Activated T-helper 2 cell treated with anti-CD3 and anti-CD28 coated beads, Interferon-gamma antibody, Interleukin-2, Interleukin-4, amounts not matched to agents 10 μg/mL and 5 μg/mL and 100 μg/mL, durations not matched to agents 14 hours and 24 hours and 36 hours (primary cell): ENCODE measurements at regions of chr10 and their contacts with region 1.

Region 1: DNA sequence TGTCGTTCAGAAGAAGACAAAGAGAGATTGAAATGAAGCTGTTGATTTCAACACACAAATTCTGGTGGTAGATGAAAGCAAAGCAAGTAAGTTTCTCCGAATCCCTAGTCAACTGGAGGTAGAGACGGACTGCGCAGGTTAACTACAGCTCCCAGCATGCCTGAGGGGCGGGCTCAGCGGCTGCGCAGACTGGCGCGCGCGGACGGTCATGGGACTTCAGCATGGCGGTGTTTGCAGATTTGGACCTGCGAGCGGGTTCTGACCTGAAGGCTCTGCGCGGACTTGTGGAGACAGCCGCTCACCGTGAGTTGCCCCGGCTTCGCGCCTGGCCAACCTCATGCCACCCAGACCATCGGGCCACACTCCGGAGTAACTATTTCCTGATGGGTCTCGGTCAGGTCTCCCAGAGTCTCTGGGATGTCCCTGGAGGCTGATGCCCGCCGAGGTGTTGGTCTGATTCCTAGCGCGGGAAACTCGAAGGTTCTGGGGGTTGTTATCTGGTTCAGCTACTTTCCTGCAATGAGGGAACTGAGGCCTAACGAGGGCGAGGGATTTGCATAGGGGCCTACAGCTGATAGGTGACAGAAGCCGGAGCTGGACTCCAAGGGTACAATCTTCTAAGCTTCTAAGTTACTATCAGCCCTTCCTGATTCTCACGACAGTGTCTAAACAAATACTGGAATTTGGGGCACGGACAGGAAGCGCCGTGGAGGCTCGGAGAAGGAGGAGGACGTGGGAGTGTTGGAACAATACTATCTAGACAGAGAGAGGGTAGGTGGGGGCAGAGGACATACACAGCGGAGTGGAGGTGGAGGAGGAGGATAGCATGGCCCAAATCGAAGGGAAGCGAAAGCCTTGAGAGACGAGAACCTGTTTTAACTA is at the start of gene RPP30:
- DNase-seq: peak; percentile 76
- H3K4me3 Mint-ChIP-seq: peak within 1 kb of the TSS; percentile 100
- H3K27ac Mint-ChIP-seq: peak within 1 kb of the TSS; percentile 97
- H3K4me1 Mint-ChIP-seq: peaks cover 25% of the 10 kb centered on the region
- H3K27me3 Mint-ChIP-seq: peaks cover 21% of the 10 kb centered on the region
- total RNA-seq, gene RPP30: 69.1 and 73.4 TPM in 2 replicates

Region 2: GRCh38 chr10:89793649-89794254 is 1078.3 kb before region 1 on chr10:
- intact Hi-C with region 1: loop called (anchors 1 kb)
- DNase-seq: no peak
- H3K4me3 Mint-ChIP-seq: no peak overlapping the region
- H3K27ac Mint-ChIP-seq: no peak overlapping the region
- H3K4me1 Mint-ChIP-seq: peaks cover 9% of the 10 kb centered on the region
- H3K27me3 Mint-ChIP-seq: no peaks in the 10 kb centered on the region

Region 3: DNA sequence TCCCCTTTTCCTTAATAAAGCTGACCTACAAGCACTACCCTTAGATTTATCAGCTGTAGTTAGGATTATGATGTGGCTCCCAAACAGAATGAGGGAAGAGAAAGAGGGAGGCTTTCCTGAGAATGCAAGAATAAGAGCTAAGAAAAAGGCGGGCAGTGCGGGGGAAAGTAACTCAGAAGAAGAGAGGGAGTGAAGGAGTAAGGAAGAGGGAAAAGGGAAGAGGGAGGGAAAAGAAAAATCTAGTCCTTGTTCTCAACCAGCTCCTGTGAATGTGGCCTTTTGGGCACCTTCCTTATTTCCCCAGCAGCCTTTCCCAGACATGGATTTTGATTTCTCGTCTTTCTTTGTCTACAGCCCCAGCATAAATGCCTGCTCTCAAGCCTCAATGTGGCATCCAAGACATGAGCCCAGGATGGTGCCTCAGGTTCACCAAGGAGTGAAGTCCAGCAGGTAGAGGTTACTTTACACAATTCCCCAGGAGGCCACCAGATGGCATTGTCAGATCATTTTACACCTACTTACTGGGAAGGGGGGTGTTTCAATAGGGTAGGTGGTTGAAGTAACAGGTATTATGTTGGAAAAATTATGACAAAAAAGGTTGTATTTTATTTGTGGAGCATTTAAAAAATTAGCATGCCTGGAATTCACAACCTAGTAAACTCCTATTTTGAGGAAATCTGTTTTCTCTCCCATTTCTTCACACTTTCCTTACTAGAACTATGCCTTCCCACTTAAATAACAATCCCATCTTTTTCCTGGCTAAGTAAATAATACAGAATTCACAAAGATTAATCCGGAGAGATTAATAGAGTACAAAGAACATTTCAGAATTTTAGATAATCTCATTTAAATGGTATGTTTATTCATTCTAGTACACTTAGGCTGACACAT is 120.7 kb before region 1 on chr10:
- intact Hi-C with region 1: loop called (anchors 1 kb)
- DNase-seq: peak; percentile 13
- H3K4me3 Mint-ChIP-seq: no peak overlapping the region
- H3K27ac Mint-ChIP-seq: no peak overlapping the region
- H3K4me1 Mint-ChIP-seq: no peaks in the 10 kb centered on the region
- H3K27me3 Mint-ChIP-seq: peaks cover 31% of the 10 kb centered on the region

Region 4: GRCh38 chr10:91163269-91163868 is 291.4 kb after region 1 on chr10:
- intact Hi-C with region 1: loop called (anchors 2 kb)
- DNase-seq: peak; percentile 70
- H3K4me3 Mint-ChIP-seq: peak overlapping the region; percentile 85
- H3K27ac Mint-ChIP-seq: peak overlapping the region; percentile 76
- H3K4me1 Mint-ChIP-seq: peaks cover 34% of the 10 kb centered on the region
- H3K27me3 Mint-ChIP-seq: no peaks in the 10 kb centered on the region